SK-N-SH (cell line): ENCODE measurements at regions of chr16 and their contacts with region 1.

Region 1: DNA sequence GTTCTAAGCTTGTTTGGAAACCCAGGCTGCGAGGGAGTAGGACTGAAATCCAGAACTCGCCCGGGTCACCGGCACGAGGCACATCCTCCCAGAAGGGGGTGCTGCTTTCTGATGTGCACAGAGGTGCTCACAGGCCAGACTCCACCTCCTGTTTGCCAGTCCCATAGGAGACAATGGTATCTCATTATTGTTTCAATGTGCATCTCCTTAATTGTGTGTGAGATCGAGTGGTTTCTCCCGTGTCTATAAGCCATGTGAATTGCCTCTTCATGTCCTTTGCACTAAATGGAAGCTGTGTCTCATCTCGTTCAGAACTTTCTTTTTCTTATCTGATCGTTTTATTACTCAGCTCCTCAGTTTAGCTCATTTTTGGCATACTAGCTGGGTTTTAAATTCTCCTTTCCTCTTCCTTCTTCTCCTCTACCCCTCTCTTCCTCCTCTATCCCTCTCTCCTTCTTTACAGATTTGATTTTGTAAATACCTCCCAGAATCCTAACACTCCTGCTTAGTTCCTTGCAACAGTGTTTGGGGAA is 32.1 kb upstream of the PRKCB start:
- DNase-seq: peak; percentile 66
- H3K4me3 ChIP-seq: peak overlapping the region in 1 of 2 experiments; percentile 1; a peak in 1 of 4 replicates
- H3K27ac ChIP-seq: no peak overlapping the region
- H3K4me1 ChIP-seq: peaks cover 0 to 5% of the 10 kb centered on the region in 2 experiments; a peak in 1 of 4 replicates
- H3K27me3 ChIP-seq: no peaks in the 10 kb centered on the region; the same call in 1 of the 2 replicates
- CTCF ChIP-seq: peak; percentile 55
- EP300 ChIP-seq: no peak
- RAD21 ChIP-seq: peak; percentile 59

Region 2: GRCh38 chr16:23788685-23789084 is 15.0 kb before region 1 on chr16:
- CTCF ChIA-PET with region 1: interaction called, 10 read pairs
- POLR2A ChIA-PET with region 1: no interaction called
- DNase-seq: no peak
- H3K4me3 ChIP-seq: no peak overlapping the region
- H3K27ac ChIP-seq: no peak overlapping the region
- H3K4me1 ChIP-seq: no peaks in the 10 kb centered on the region
- H3K27me3 ChIP-seq: no peaks in the 10 kb centered on the region
- CTCF ChIP-seq: no peak
- EP300 ChIP-seq: no peak
- RAD21 ChIP-seq: no peak